Activated naive CD4-positive, alpha-beta T cell treated with anti-CD3 and anti-CD28 coated beads for 36 hours (primary cell): ENCODE measurements at regions of chr10 and their contacts with region 1.

Region 1: GRCh38 chr10:79347226-79347893 is at the start of gene PPIF:
- DNase-seq: peak; percentile 93
- H3K4me3 Mint-ChIP-seq: peak within 1 kb of the TSS; percentile 89
- H3K27ac Mint-ChIP-seq: peak within 1 kb of the TSS; percentile 95
- H3K4me1 Mint-ChIP-seq: peaks cover 36% of the 10 kb centered on the region
- H3K27me3 Mint-ChIP-seq: no peaks in the 10 kb centered on the region
- total RNA-seq, gene PPIF: 94.1 to 95.6 TPM

Region 2: DNA sequence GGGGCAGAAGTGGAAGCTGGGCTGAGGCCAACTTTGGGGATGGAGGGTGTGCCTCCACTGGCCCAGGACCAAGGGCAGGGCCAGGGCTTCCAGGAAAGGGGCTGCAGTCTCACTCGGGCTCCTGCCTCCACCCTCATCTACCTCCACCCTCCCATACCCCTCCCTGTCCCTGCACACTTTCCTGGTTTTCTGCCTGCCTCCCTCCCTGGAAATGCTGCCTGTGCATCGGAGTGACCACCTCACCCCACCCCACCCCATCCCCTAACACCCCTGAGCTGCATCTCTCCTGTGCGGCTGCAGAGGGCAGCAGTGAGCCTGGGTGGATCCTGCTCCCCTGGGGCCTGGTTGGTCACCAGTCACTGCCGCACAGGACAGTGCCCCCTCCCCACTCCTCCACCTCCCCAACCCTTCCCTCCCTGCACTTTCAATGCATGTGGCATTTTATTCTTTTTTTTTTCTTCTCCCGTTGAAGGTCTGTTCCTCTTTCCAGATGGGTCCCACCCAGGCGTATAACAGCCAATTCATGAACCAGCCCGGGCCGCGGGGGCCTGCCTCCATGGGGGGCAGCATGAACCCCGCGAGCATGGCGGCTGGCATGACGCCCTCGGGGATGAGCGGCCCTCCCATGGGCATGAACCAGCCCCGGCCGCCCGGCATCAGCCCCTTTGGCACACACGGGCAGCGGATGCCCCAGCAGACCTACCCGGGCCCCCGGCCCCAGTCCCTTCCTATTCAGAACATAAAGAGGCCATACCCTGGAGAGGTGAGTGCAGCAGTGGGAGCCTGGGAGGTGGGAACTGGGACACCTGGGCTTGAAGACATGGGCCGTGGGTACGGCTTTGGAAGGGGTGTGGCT is 54.2 kb before region 1 on chr10:
- CTCF ChIA-PET with region 1: interaction called, 9 read pairs
- intact Hi-C with region 1: loop called (anchors 1 kb)
- DNase-seq: peak; percentile 51
- H3K4me3 Mint-ChIP-seq: no peak overlapping the region
- H3K27ac Mint-ChIP-seq: no peak overlapping the region
- H3K4me1 Mint-ChIP-seq: peaks cover 8% of the 10 kb centered on the region
- H3K27me3 Mint-ChIP-seq: no peaks in the 10 kb centered on the region

Region 3: DNA sequence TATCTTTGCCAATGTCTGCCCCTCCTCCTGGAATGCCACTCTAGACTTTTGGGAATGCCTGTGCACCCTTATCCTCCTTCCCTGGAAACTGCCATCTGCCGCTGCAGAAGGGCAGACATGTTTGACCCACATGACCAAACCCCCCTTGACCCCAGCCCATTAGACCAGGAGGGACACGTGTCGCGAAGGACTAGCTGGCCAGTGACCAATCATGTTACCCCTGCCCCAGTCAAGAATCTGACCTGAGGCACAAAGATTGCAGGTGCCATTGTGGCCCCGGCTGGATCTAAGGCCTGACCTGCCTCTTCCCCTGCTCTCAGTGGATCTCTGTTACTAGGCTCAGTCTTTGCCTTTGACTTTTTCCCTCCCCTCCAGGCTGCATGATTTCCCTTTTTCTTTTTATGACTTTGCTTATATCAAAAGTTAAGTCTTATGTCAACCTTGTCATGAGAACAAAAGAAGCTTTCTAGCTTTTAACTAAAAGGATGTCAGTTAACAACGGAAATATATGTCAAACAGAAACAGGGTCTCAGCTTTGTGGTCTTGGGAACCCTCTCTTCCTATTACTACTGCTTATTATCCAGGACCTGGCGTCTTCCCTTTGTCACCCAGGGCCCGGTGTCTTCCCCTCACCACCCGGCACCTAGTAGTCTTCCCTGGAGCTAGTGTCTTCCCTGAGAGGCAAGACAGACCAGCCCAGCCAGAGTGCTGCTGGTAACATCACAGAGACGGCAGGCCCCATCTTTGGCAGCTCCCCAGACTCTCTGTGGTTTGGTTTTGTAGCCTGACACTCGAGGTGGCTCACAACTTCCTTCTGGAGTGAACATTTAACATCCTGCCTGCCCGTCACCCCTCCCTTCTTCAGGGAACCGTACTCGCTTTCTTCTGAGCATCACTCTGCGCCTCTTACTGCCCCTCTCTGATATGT is 24.5 kb before region 1 on chr10:
- CTCF ChIA-PET with region 1: interaction called, 20 read pairs
- intact Hi-C with region 1: no loop called
- DNase-seq: peak; percentile 95
- H3K4me3 Mint-ChIP-seq: peak overlapping the region; percentile 33
- H3K27ac Mint-ChIP-seq: peak overlapping the region; percentile 92
- H3K4me1 Mint-ChIP-seq: peaks cover 68% of the 10 kb centered on the region
- H3K27me3 Mint-ChIP-seq: no peaks in the 10 kb centered on the region

Region 4: DNA sequence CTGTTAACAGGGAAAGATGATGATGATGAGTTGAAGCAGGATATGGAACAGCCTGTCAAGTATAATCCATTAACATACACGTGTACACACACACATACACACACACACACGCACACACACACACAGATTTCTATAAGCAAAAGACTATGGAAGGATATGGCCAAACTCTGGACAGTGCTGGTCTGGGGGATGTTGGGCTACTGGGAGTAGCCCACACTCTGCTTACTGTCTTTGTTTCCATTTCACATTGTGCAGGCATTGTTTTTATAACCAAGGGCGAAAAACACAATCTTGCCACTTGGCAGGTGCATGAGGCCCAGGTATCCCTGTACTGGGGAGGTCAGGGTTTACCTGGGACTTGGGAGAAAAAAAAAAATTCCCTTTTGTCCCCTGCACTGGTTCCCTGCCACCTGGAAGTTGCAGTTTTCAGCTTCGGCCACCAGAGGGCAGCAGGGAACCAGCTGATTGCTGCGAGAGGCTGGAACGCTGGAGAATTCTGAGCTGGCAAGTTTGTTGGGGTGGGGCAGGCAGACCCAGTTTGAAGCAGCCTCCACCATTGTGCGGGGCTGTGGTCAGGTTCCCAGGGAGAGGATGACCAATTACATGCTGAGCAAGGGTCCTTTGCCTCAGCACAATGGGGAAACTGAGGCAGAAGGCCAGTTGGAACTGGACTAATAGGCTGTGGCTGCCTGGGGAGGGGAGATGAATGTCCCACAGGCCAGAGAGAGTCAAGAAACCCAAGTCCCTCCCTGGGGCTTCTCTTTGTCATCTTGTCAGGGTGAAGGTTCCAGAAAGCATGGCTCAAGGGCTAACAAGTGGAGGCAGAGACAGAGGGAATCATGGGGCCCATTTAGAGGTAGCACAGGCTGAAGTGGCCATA is 27.2 kb after region 1 on chr10:
- CTCF ChIA-PET with region 1: interaction called, 14 read pairs
- intact Hi-C with region 1: no loop called
- DNase-seq: peak; percentile 85
- H3K4me3 Mint-ChIP-seq: no peak overlapping the region
- H3K27ac Mint-ChIP-seq: no peak overlapping the region
- H3K4me1 Mint-ChIP-seq: peaks cover 2% of the 10 kb centered on the region
- H3K27me3 Mint-ChIP-seq: no peaks in the 10 kb centered on the region